OCI-LY7 (cell line): ENCODE measurements at regions of chr1 and their contacts with region 1.

Region 1: DNA sequence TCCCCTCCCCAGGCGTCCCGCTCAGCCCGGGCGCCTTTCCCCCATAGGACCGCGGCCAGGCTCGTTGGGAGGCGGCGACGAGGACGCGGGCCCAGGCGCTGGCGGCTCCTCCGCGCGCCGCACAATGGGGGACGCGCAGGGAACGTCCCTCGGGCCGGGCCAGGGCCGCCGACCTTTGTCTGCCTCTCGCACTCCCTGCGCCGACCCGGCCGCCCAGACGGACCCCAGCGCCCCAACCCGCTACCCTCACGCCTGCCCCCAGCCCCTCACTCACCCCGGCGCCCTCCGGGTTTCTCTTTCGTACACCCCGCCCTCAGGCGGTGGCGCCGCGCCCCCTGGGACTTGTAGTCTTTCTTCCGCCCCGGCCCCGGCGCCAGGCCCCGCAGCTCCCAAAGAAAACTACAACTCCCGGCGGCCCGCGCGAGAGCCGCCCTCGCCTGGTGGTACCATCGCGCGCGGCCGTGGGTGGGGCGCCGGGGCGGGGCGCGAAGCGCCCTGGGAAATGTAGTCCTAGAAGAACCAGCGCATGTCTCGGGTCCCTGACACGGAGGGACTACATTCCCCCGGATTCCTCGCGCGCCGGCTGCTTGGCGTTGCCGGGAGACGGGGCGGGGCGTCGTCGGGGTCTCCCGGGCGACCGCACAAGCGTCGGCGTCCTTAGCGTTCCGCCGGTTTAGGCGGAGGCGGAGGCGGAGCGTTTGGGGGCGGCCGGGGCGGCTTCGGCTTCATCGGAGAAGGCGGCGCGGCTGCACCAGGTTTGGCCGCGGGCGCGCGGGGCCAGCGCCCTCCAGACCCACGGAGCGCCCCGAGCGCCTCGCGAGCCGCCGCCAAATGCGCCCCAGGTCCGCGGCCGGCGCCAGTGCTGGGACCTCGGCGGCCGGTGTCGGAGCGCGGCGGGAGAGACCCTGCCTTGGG is at the start of gene C1orf159:
- DNase-seq: peak; percentile 98
- H3K4me3 ChIP-seq: peak within 1 kb of the TSS; percentile 95
- H3K27ac ChIP-seq: no peak within 1 kb of the TSS
- H3K4me1 ChIP-seq: peaks cover 5% of the 10 kb centered on the region
- CTCF ChIP-seq: no peak
- total RNA-seq, gene C1orf159: 13.1 and 27.6 TPM in 2 replicates

Region 2: GRCh38 chr1:1200851-1201810 is 85.1 kb after region 1 on chr1:
- CTCF ChIA-PET with region 1: no interaction called
- POLR2A ChIA-PET with region 1: no interaction called
- intact Hi-C with region 1: no loop called
- DNase-seq: no peak
- H3K4me3 ChIP-seq: no peak overlapping the region
- H3K27ac ChIP-seq: no peak overlapping the region
- H3K4me1 ChIP-seq: no peaks in the 10 kb centered on the region
- CTCF ChIP-seq: no peak

Region 3: GRCh38 chr1:1231400-1232223 is 115.6 kb after region 1 on chr1 and contains the start of gene SDF4:
- CTCF ChIA-PET with region 1: no interaction called
- POLR2A ChIA-PET with region 1: no interaction called
- intact Hi-C with region 1: loop called (anchors 1 kb)
- DNase-seq: peak; percentile 97
- H3K4me3 ChIP-seq: peak within 1 kb of the TSS; percentile 78
- H3K27ac ChIP-seq: peak within 1 kb of the TSS; percentile 43
- H3K4me1 ChIP-seq: peaks cover 28% of the 10 kb centered on the region
- CTCF ChIP-seq: no peak
- total RNA-seq, gene SDF4: 44.2 and 47.7 TPM in 2 replicates

Region 4: GRCh38 chr1:1273512-1274298 is 157.7 kb after region 1 on chr1 and contains the start of gene UBE2J2:
- CTCF ChIA-PET with region 1: no interaction called
- POLR2A ChIA-PET with region 1: interaction called, 3 read pairs
- intact Hi-C with region 1: loop called (anchors 1 kb)
- DNase-seq: peak; percentile 94
- H3K4me3 ChIP-seq: peak within 1 kb of the TSS; percentile 94
- H3K27ac ChIP-seq: peak within 1 kb of the TSS; percentile 12
- H3K4me1 ChIP-seq: peaks cover 26% of the 10 kb centered on the region
- CTCF ChIP-seq: no peak
- total RNA-seq, gene UBE2J2: 61.6 and 69.2 TPM in 2 replicates

Region 5: DNA sequence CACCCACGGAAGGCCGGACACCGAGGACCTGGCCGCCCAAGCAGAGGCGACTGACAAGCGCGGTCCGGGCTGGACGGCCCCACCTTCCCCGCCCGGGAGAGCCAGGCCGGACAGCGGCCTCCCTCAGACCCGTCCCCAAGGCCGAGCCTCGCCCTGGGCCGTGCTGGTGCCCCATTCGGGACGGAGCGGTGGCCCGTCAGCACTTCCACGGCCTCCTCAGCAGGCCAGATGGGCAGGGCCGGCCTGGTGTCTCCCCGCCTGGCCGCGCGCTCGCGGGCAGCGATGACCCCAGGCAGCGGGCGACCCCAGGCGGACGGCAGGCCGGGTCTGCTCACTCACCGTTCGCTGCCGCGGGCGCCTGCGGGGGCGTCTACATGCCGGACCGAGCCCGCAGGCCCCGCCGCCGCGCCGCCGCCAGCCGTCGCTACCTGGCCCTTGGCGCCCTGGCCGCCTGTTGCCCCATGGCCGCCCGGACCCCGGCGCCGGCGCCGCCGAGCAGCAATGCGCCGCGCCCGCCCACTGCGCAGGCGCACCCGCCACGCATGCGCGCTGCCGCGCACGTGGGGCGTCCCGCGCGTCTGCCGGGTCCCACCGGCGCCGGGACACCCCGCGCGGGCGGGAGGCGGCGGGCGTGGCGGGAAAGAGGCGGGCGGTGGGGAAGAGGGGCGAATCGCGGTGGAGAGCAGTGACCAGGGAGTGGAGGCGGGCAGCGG is 662.1 kb after region 1 on chr1 and contains the start of gene NADK:
- CTCF ChIA-PET with region 1: no interaction called
- POLR2A ChIA-PET with region 1: no interaction called
- intact Hi-C with region 1: no loop called
- DNase-seq: peak; percentile 84
- H3K4me3 ChIP-seq: peak within 1 kb of the TSS; percentile 97
- H3K27ac ChIP-seq: peak within 1 kb of the TSS; percentile 96
- H3K4me1 ChIP-seq: peaks cover 71% of the 10 kb centered on the region
- CTCF ChIP-seq: no peak
- total RNA-seq, gene NADK: 144 and 156 TPM in 2 replicates